ENCODE measurements at regions of chr3 and their contacts with region 1.

Region 1: GRCh38 chr3:104610730-104611647 is 755.7 kb upstream of the ALCAM start:
- DNase-seq: no peak
- CTCF ChIP-seq: no peak

Region 2: DNA sequence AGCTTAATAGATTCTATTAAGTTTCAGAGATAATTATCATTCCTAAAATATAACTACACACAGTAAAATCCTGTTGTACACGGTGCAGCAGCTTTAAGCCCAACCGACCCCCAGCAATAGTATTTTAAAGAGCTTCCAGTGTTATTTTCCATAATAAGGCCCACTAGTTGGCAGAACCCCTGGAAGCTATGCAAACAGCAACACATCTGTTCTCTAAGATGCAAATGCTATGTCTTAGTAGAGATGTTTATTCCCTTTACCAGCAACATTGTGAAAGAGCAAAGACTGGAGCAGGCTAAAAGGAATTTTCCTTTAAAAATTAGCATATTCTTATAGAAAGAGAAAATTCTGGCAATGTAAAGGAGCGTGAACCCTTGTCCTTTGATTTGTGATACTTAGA is 64.0 kb before region 1 on chr3:
- CTCF ChIA-PET with region 1: no interaction called
- POLR2A ChIA-PET with region 1: no interaction called
- DNase-seq: no peak
- CTCF ChIP-seq: no peak

Region 3: GRCh38 chr3:104628185-104628789 is 17.3 kb after region 1 on chr3:
- CTCF ChIA-PET with region 1: interaction called, 10 read pairs
- POLR2A ChIA-PET with region 1: no interaction called
- DNase-seq: peak; percentile 37
- CTCF ChIP-seq: peak; percentile 47